Activated naive CD4-positive, alpha-beta T cell treated with anti-CD3 and anti-CD28 coated beads for 36 hours (primary cell): ENCODE measurements at regions of chrX and their contacts with region 1.

Region 1: DNA sequence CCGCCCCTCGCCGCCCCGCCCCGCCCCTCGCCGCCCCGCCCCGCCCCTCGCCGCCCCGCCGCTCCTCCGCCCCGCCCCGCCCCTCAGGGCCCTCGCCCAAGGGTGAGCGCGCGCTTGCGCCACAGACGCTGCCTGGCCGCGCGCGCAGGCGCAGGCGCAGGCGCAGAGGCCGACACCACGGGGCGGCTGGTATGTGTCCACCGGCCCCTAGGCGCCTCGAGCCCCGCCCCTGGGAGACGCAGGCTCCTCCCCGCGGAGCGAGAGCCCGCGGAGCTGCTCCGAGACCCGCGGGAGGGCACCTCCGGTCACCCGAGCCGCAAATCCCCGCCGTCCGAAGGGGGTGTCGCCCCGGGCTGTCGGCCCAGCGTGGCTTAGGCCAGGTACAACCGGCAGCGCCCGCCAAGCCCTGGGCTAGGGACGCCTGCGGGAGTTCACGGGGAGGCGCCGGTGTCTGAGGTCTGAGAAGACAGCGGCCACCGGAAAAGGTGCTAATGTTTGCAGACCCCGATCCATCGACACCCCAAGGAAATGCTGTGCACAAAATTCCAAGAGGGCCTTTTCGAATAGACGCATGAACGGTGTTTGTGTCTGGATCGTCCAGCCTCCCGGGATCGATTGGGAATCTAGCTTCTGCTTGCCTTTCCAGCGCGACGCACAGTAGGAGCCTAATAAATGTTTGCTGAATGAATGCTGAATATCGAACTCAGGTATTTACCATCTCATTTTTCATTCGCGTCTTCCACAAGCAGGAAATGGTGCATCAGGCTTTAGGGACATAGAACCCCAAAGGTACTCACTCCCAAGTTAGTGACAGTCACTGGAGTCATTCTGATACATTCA is 473 bp upstream of the CCNQ start:
- DNase-seq: peak; percentile 86
- H3K4me3 Mint-ChIP-seq: peak overlapping the region; percentile 82
- H3K27ac Mint-ChIP-seq: peak overlapping the region; percentile 68
- H3K4me1 Mint-ChIP-seq: peaks cover 49% of the 10 kb centered on the region
- H3K27me3 Mint-ChIP-seq: no peaks in the 10 kb centered on the region

Region 2: GRCh38 chrX:153333768-153334645 is 265.4 kb before region 1 on chrX and contains the start of gene ZNF275:
- CTCF ChIA-PET with region 1: no interaction called
- intact Hi-C with region 1: loop called (anchors 5 kb)
- DNase-seq: peak; percentile 78
- H3K4me3 Mint-ChIP-seq: peak within 1 kb of the TSS; percentile 85
- H3K27ac Mint-ChIP-seq: peak within 1 kb of the TSS; percentile 80
- H3K4me1 Mint-ChIP-seq: peaks cover 42% of the 10 kb centered on the region
- H3K27me3 Mint-ChIP-seq: no peaks in the 10 kb centered on the region
- total RNA-seq, gene ZNF275: 10.8 to 11.5 TPM

Region 3: DNA sequence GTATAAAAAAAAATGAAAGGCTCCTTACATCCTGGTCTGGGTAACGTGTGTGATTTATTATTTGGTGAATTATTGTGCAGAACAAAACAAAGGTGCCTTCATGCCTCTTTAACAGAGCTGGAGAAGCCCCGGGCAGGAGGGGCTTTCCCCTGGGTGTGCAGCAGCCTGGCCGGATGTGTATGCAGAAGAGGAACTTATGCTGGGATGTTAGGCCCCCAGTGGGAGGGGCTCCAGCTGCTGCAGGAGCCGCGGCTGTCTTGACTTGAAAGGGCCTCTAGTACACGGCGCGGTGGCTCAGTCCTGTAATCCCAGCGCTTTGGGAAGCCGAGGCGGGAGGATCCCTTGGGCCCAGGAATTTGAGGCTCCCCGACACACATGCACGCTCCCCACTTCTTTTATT is 16.5 kb before region 1 on chrX:
- CTCF ChIA-PET with region 1: no interaction called
- intact Hi-C with region 1: loop called (anchors 1 kb)
- DNase-seq: peak; percentile 83
- H3K4me3 Mint-ChIP-seq: peak overlapping the region; percentile 41
- H3K27ac Mint-ChIP-seq: peak overlapping the region; percentile 56
- H3K4me1 Mint-ChIP-seq: peaks cover 21% of the 10 kb centered on the region
- H3K27me3 Mint-ChIP-seq: no peaks in the 10 kb centered on the region

Region 4: GRCh38 chrX:153667956-153668396 is 68.6 kb after region 1 on chrX:
- CTCF ChIA-PET with region 1: interaction called, 4 read pairs
- intact Hi-C with region 1: loop called (anchors 2 kb)
- DNase-seq: peak; percentile 86
- H3K4me3 Mint-ChIP-seq: peak overlapping the region; percentile 70
- H3K27ac Mint-ChIP-seq: no peak overlapping the region
- H3K4me1 Mint-ChIP-seq: peaks cover 8% of the 10 kb centered on the region
- H3K27me3 Mint-ChIP-seq: peaks cover 8% of the 10 kb centered on the region

Region 5: GRCh38 chrX:153794018-153794896 is 194.8 kb after region 1 on chrX and contains the starts of genes IDH3G and SSR4:
- CTCF ChIA-PET with region 1: no interaction called
- intact Hi-C with region 1: loop called (anchors 1 kb)
- DNase-seq: peak; percentile 94
- H3K4me3 Mint-ChIP-seq: peak within 1 kb of the TSS; percentile 94
- H3K27ac Mint-ChIP-seq: peak within 1 kb of the TSS; percentile 87
- H3K4me1 Mint-ChIP-seq: peaks cover 29% of the 10 kb centered on the region
- H3K27me3 Mint-ChIP-seq: no peaks in the 10 kb centered on the region
- total RNA-seq, gene IDH3G: 46.3 to 49.9 TPM
- total RNA-seq, gene SSR4: 148 to 152 TPM